ENCODE measurements at regions of chr19 and their contacts with region 1.

Region 1: DNA sequence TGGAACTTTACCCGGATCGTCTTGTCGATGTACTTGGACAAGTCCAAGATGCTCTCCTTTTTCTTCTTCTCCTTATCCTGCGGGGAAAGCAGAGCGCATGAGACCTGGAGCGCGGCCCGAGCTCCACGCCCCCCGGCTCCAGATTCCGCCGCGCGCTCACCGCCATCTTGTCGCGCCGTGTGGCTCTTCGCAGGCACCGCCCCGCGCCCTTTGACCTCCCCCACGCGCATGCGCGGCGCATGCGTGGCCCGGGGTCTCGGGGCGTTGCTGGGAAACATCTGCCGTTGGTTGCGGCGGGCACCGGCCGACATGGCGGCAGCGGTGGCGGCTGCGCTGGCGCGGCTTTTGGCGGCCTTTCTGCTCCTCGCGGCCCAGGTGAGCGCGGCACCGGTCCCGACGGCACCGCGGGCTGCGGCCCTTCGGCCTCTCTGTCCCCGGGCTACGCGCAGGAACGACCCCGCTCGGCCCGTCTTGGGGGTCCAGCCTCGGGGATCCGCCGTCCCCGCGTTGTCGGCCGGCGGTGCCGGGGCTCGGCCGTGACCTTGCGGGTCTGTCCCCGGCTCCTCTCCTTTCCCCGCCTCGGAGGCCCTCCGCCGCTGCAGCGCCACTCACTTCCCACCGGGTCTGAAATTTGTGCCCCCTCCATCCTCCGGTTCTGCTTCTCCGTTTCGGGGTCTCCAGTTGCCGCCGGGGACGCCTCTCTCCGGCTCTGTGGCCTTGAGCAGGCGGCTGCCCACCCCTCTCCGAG is at the starts of genes LSM7 and SPPL2B:
- DNase-seq: peak; percentile 83
- total RNA-seq, gene LSM7: 400 and 511 TPM in 2 replicates
- total RNA-seq, gene SPPL2B: 31.6 and 36.5 TPM in 2 replicates

Region 2: DNA sequence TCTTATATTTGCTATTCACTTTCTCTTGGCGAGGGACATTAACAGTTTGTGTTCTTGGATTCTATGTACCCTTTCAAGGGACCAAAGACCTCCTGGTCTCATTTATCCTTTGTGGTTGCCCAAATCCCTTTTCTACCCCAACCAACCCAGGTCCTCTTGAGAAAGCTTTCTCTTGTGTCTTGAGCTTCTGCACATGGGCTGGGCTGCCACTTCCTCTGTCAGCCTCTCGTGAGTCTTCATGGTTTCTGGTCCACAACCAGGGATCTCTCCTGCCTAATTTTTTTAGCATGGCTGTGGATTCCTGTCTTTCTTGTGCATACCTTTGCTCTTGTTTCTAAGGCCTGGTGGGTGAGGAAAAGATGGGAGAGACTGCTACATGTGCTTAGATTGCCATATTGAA is 83.9 kb after region 1 on chr19:
- in situ Hi-C with region 1: loop called (anchors 5 kb)
- DNase-seq: no peak

Measured in G401 (cell line).